A549 (cell line): ENCODE measurements at regions of chr14 and their contacts with region 1.

Region 1: DNA sequence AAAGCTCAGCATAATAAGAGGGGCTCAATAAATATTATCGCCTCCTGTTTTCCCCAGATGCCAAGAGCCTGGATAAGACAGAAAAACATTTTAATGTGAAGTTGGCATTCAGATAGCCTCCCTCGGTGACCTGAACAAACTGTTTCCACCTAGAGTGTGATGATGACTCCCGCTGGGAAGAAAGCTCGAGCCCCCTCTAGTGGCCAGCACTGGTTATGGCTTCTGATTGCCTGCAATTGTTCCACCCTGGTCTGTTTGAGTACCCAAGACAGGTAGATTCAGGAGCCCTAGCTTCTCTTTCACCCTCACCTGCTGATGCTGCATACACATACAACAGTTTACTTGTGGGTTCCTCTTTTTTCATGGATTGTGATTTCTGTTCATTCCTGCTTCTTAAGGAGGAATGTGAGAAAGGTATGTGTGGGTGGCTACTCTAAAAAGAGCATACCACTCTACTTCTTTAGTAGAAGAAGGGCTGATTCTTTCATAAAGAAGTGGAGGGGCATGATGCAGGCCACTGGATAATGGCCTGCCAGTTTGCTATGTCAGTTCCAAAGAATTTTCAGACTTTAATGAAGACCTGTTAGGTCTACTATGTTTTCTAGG is 6.4 kb downstream of the ERG28 start:
- DNase-seq: peak; percentile 66 to 86
- ATAC-seq: peak; percentile 93 to 98
- H3K4me3 ChIP-seq: no peak overlapping the region
- H3K27ac ChIP-seq: peak overlapping the region; percentile 2 to 24; a peak in 1 of 6 replicates
- H3K4me1 ChIP-seq: peaks cover 16% of the 10 kb centered on the region; the same call in 2 of the 3 replicates
- CTCF ChIP-seq: peak; percentile 94
- EP300 ChIP-seq: no peak
- POLR2A ChIP-seq: no peak
- RAD21 ChIP-seq: peak; percentile 91 to 95

Region 2: DNA sequence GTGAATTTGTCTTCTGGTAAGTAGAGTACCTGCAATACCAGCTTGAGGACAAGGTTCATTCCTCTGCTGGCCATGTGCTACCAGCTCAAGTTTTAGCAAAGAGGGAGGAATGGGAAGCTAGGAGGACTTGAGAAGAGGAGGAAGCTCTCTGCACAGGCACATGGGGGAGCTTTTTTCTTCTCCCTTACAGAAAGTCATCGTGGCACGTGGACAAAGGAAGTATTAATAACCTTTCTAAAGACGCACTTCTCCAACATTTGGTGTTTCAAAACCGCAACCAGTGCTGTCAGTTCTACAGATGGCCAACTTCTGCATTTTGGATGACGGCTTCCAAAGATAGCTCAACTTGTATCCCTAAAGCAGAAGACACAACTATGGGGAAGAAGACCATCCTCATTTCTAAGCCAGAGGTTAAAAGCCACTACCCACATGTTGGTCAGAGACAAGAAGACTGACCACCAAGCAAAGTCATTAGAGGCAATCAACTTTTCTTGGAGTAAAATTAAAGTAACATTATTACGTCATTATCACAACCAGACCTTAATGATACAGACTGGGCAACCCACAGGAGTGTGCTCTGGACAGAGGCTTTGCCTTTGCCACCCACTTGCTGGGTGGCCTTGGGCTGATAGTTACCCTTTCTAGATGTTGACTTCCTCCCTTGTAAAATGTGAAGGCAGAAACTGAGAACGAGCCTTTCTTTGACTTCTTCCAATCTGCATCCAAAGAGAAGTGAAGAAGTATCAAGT is 465.5 kb before region 1 on chr14:
- CTCF ChIA-PET with region 1: no interaction called
- POLR2A ChIA-PET with region 1: no interaction called
- DNase-seq: no peak
- ATAC-seq: no peak
- H3K4me3 ChIP-seq: no peak overlapping the region
- H3K27ac ChIP-seq: no peak overlapping the region
- H3K4me1 ChIP-seq: peaks cover under 1% of the 10 kb centered on the region; the same call in 1 of the 3 replicates
- CTCF ChIP-seq: no peak
- EP300 ChIP-seq: no peak
- POLR2A ChIP-seq: no peak
- RAD21 ChIP-seq: no peak

Region 3: DNA sequence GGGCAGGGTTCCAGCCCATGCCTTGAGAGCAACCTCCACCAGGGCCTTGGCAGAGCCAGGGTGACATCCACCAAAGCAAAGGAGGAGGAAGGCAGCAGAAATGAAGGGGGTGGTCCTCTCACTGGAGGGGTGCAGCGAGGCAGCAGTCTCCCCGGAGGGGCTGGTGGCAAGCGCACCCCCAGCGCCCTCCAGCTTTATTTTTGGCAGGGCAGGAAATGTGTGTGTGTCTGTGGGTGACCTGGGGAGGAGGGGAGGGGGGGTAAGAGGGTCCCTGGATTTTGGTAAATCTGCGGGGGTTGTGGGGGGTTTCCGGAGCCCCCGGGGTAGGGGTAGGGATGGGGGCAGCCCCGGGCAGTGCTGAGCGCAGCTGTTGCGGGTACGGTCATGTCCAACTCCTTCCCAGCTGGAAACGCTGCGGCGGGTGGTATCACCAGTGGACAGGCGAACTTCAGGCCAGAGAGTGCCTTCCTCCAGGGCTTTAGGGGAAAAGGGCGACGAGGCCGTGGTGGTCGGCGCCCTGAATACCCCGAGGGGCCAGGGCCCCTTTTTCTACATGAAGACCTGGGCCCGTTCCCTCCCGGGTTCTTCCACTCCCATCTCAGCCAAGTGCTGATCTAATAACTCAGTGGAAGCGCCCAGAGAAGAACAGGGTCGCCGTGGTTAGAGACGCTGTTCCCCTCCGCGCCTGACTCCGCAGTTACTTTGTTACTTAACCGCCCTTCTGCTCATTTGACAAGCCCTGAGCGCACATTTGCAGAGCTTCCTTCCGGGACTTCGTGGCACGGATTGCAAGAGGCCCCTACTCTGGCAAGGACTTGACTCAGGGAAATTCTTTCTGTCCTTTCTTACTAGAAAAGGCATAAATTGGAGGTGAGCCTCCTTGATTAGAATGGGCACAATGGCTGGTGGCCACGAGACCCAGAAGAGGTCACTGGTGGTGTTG is 320.4 kb before region 1 on chr14:
- CTCF ChIA-PET with region 1: no interaction called
- POLR2A ChIA-PET with region 1: no interaction called
- DNase-seq: no peak
- ATAC-seq: no peak
- H3K4me3 ChIP-seq: no peak overlapping the region
- H3K27ac ChIP-seq: no peak overlapping the region
- H3K4me1 ChIP-seq: no peaks in the 10 kb centered on the region
- CTCF ChIP-seq: no peak
- EP300 ChIP-seq: no peak
- POLR2A ChIP-seq: no peak
- RAD21 ChIP-seq: no peak

Region 4: DNA sequence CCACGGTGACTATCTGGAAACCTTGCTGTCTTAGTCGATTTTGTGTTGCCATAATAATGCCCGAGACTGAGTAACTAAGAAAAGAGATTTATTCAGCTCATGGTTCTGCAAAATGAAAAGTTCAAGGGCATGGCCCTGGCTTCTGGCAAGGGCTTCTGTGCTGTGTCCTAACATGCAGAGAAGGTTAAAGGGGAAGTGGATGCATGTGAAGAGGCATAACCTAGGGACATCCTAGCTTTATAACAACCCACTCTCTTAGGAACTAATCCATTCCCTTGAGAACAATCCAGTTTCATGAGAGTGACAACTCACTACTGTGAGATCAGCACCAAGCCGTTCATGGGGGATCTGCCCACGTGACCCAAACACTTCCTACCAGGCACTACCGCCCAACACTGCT is 64.3 kb before region 1 on chr14:
- CTCF ChIA-PET with region 1: interaction called, 10 read pairs
- POLR2A ChIA-PET with region 1: no interaction called
- DNase-seq: no peak
- ATAC-seq: no peak
- H3K4me3 ChIP-seq: no peak overlapping the region
- H3K27ac ChIP-seq: no peak overlapping the region
- H3K4me1 ChIP-seq: no peaks in the 10 kb centered on the region
- CTCF ChIP-seq: no peak
- EP300 ChIP-seq: no peak
- POLR2A ChIP-seq: no peak
- RAD21 ChIP-seq: no peak

Region 5: GRCh38 chr14:75604856-75605851 is 49.1 kb before region 1 on chr14:
- CTCF ChIA-PET with region 1: interaction called, 19 read pairs
- POLR2A ChIA-PET with region 1: no interaction called
- DNase-seq: no peak
- ATAC-seq: no peak
- H3K4me3 ChIP-seq: no peak overlapping the region
- H3K27ac ChIP-seq: no peak overlapping the region
- H3K4me1 ChIP-seq: peaks cover 15% of the 10 kb centered on the region
- CTCF ChIP-seq: no peak
- EP300 ChIP-seq: no peak
- POLR2A ChIP-seq: no peak
- RAD21 ChIP-seq: no peak

Region 6: GRCh38 chr14:75615200-75615599 is 39.0 kb before region 1 on chr14:
- CTCF ChIA-PET with region 1: interaction called, 15 read pairs
- POLR2A ChIA-PET with region 1: no interaction called
- DNase-seq: no peak
- ATAC-seq: no peak
- H3K4me3 ChIP-seq: no peak overlapping the region
- H3K27ac ChIP-seq: no peak overlapping the region
- H3K4me1 ChIP-seq: no peaks in the 10 kb centered on the region
- CTCF ChIP-seq: no peak
- EP300 ChIP-seq: no peak
- POLR2A ChIP-seq: no peak
- RAD21 ChIP-seq: no peak

Region 7: GRCh38 chr14:75628816-75629215 is 25.4 kb before region 1 on chr14:
- CTCF ChIA-PET with region 1: interaction called, 10 read pairs
- POLR2A ChIA-PET with region 1: no interaction called
- DNase-seq: no peak
- ATAC-seq: no peak
- H3K4me3 ChIP-seq: no peak overlapping the region
- H3K27ac ChIP-seq: no peak overlapping the region
- H3K4me1 ChIP-seq: peaks cover 2% of the 10 kb centered on the region; the same call in 1 of the 3 replicates
- CTCF ChIP-seq: no peak
- EP300 ChIP-seq: no peak
- POLR2A ChIP-seq: no peak
- RAD21 ChIP-seq: no peak

Region 8: GRCh38 chr14:75642056-75642455 is 12.2 kb before region 1 on chr14:
- CTCF ChIA-PET with region 1: interaction called, 15 read pairs
- POLR2A ChIA-PET with region 1: interaction called, 3 read pairs
- DNase-seq: no peak
- ATAC-seq: no peak
- H3K4me3 ChIP-seq: no peak overlapping the region
- H3K27ac ChIP-seq: no peak overlapping the region
- H3K4me1 ChIP-seq: peaks cover 24% of the 10 kb centered on the region
- CTCF ChIP-seq: no peak
- EP300 ChIP-seq: no peak
- POLR2A ChIP-seq: no peak
- RAD21 ChIP-seq: no peak

Region 9: GRCh38 chr14:75667099-75667765 is 13.0 kb after region 1 on chr14:
- CTCF ChIA-PET with region 1: interaction called, 11 read pairs
- POLR2A ChIA-PET with region 1: no interaction called
- DNase-seq: no peak
- ATAC-seq: no peak
- H3K4me3 ChIP-seq: no peak overlapping the region
- H3K27ac ChIP-seq: no peak overlapping the region
- H3K4me1 ChIP-seq: peaks cover 3% of the 10 kb centered on the region; the same call in 1 of the 3 replicates
- CTCF ChIP-seq: no peak
- EP300 ChIP-seq: no peak
- POLR2A ChIP-seq: no peak
- RAD21 ChIP-seq: no peak

Region 10: DNA sequence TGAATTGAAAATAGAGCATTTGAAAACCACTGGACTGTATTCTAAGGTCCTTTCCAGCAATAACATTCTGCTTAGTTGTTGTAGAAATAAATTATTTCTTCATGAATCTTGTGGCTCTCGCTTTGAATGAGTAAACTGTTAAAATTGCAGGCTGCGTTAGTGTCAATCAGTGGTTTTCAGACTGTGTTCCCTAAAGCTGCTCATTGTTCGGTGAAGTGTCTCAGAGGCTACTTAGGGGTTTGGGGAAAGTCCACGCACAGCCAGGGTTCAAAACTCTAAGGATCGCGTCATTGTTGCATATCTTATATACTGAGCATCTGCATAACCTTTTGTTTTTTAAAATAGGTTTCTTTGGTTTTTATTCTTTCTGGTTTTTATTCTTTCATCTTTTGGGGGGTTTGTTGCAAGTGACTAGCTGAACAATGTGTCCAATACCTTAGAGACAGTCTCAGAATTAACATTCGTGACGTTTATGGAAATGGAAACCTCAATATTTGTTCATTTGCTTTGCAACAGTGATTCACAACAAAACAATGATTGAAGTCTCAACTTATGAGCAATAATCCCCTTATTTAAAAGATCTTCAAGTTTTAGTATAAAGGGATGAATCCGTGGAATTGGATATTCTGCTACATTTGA is 114.9 kb after region 1 on chr14:
- CTCF ChIA-PET with region 1: no interaction called
- POLR2A ChIA-PET with region 1: no interaction called
- DNase-seq: no peak
- ATAC-seq: no peak
- H3K4me3 ChIP-seq: no peak overlapping the region
- H3K27ac ChIP-seq: no peak overlapping the region
- H3K4me1 ChIP-seq: no peaks in the 10 kb centered on the region
- CTCF ChIP-seq: no peak
- EP300 ChIP-seq: no peak
- POLR2A ChIP-seq: no peak
- RAD21 ChIP-seq: no peak